ENCODE measurements at regions of chr6 and their contacts with region 1.

Region 1: GRCh38 chr6:31834434-31835198 is 7.1 kb downstream of the HSPA1B start:
- DNase-seq: peak; percentile 78 to 97 (median 84)

Region 2: GRCh38 chr6:31680840-31681671 is 153.6 kb before region 1 on chr6 and contains the start of gene LY6G5C:
- intact Hi-C with region 1: loop called (anchors 2 kb)
- DNase-seq: peak; percentile 65 to 97 (median 81)

Region 3: DNA sequence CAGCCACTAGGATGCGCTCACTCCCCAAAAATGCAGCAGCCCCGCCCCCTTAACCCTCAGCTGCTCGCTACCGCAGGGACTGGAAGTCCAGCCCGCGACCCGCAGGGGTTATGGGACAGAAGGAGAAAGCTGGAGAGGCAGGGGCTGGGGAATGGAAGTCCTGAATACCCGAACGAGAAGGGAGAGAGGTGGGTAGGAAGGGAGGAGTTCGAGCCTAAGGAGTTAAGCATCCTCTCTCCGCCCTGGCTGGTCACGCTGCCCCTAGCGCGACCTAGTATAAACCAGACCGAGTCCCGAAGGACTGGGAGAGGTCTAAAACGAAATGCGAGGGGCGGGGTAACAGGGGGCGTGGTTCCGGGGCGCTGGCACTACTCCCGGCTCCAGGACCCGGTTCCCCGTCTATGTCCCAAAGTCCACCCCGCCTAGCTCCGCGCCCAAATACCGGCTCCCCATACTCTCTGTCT is 105.1 kb before region 1 on chr6:
- intact Hi-C with region 1: loop called (anchors 5 kb)
- DNase-seq: peak; percentile 44 to 96 (median 74)